Activated naive CD4-positive, alpha-beta T cell treated with anti-CD3 and anti-CD28 coated beads for 36 hours (primary cell): ENCODE measurements at regions of chr6 and their contacts with region 1.

Region 1: DNA sequence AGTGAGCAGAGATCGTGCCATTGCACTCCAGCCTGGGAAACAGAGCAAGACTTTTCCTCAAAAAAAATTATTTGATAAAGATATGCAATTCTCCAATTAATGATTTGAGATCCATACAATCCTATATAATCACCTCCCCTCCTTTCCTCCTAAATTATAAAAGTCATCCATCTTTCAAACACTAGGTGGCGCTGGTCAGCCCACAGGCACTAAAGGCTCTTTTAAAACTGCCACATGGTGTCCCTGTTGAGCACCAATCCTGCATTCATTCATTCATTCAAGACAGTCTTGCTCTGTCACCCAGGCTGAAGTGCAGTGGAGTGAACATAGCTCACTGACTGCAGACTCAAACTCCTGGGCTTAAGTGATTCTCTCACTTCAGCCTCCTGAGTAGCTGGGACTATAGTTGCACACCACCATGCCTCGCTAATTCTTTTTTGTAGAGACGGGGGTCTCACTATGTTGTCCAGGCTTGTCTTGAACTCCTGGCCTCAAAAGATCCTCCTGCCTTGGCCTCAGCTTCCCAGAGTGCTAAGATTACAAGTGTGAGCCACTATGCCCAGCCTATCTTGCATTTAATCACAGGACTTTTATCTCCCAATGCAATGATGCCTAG is 58.7 kb upstream of the SLC2A12 start:
- DNase-seq: peak; percentile 65
- H3K4me3 Mint-ChIP-seq: no peak overlapping the region
- H3K27ac Mint-ChIP-seq: no peak overlapping the region
- H3K4me1 Mint-ChIP-seq: peaks cover 2% of the 10 kb centered on the region
- H3K27me3 Mint-ChIP-seq: peaks cover 11% of the 10 kb centered on the region

Region 2: DNA sequence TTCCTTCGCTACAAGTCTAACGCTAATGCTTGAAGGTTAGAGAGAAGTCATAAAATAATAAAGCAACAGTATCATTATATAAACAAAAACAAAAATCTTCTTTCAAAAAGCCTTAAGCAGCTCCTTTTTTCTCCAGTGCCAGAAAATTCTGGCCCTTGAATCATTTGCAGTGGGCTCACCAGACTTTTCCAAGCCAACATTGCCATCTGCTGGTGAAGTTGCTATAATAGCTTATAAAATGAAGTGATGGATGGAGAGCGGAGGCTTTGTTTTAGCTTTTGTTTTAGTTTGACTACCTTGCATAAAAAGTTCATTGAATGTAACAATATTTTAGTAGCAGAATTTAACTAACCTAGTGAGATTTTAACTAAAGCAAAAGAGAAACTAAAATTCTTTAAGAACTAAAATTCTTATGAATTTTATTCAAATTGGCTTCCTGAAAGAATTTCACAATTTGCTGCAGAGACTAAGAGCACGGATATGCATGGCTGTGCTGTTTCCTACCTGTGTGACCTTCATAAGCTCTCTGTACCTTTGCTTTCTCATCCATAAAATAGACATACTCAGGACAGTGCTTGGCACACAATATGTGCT is 14.0 kb before region 1 on chr6:
- CTCF ChIA-PET with region 1: interaction called, 10 read pairs
- intact Hi-C with region 1: no loop called
- DNase-seq: peak; percentile 80
- H3K4me3 Mint-ChIP-seq: no peak overlapping the region
- H3K27ac Mint-ChIP-seq: no peak overlapping the region
- H3K4me1 Mint-ChIP-seq: no peaks in the 10 kb centered on the region
- H3K27me3 Mint-ChIP-seq: peaks cover 7% of the 10 kb centered on the region

Region 3: DNA sequence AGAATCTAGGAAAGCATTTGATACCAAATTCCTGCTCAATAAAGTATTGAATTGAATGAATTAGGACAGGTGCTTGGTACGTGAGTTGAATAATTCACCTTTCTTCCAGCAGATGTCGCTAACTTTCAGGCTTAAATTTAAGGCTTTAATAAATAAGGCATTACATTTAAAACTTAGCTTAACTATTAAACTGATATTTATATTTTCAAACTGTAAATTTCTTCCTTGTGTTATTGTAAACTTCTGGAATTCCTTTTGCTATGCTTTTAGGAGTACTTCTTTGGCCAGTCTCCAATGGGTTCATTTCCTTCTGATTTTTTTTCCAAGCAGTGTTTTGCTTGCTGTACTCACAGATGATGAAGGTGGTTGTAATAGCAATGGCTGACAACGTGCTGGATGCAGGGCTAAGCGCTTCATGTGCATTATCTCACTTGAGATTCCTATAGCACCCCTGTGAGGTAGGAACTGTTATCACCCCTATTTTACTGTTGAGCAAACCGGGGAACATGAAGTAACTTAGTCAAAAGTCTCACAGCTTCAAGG is 12.6 kb after region 1 on chr6:
- CTCF ChIA-PET with region 1: interaction called, 64 read pairs
- intact Hi-C with region 1: no loop called
- DNase-seq: no peak
- H3K4me3 Mint-ChIP-seq: no peak overlapping the region
- H3K27ac Mint-ChIP-seq: no peak overlapping the region
- H3K4me1 Mint-ChIP-seq: no peaks in the 10 kb centered on the region
- H3K27me3 Mint-ChIP-seq: no peaks in the 10 kb centered on the region

Region 4: DNA sequence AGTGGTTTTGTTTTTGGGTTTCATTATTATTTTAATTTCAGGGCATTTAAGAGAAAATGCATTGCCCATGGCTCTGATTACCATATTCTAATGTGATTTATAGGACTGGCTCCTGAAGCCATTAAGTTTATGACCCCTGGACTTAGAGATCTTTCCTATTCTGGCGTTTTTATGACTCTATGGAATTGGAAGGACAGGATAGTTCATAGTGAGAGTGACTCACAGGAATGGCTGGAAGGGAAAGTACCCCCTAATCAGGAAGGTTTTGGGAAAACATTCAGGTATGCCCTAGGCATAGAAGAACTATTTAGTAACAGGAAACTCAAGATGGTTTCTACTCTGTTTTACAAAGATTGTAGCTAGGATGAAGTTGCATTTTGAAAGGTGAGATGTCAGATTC is 49.9 kb after region 1 on chr6:
- CTCF ChIA-PET with region 1: interaction called, 4 read pairs
- intact Hi-C with region 1: loop called (anchors 1 kb)
- DNase-seq: no peak
- H3K4me3 Mint-ChIP-seq: no peak overlapping the region
- H3K27ac Mint-ChIP-seq: no peak overlapping the region
- H3K4me1 Mint-ChIP-seq: peaks cover 4% of the 10 kb centered on the region
- H3K27me3 Mint-ChIP-seq: no peaks in the 10 kb centered on the region

Region 5: DNA sequence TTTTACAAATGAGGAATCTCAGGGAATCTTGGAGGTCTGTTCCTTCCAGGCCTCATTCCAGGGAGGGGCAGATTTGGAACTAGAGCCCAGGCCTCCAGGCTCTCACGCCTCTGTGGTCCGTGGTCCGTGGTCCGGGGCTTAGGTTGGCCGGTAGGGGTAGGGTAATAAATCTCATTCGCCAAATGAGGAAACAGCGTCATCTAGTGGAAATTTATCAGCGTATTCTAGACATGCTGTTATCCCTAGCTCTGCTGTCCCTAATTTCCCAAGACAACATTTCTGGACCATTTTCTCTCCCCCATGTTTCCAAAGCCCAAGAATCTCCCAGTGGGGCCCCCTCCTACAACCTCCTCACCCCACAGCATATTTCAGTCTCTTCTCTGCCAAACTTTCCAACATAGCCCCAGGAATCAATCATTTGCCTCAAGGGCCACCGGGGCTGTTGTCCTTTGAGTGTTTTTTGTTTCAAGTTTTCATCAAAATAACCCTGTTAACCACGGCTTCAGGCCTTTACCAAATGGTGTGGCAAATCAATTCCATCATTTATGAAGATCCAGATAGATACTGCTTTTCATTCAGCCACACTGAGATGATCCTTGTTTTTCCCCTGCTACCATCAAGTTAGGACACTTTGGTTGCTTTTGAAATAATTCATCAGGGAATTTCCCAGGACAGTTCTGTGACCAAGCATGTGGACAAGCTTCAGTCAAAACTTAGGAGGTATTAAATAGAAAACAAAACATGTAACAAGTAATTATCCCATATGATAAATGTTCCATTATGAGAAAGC is 711.9 kb after region 1 on chr6:
- CTCF ChIA-PET with region 1: interaction called, 7 read pairs
- intact Hi-C with region 1: loop called (anchors 1 kb)
- DNase-seq: peak; percentile 39
- H3K4me3 Mint-ChIP-seq: no peak overlapping the region
- H3K27ac Mint-ChIP-seq: no peak overlapping the region
- H3K4me1 Mint-ChIP-seq: no peaks in the 10 kb centered on the region
- H3K27me3 Mint-ChIP-seq: no peaks in the 10 kb centered on the region

Region 6: GRCh38 chr6:134882426-134883038 is 771.4 kb after region 1 on chr6:
- CTCF ChIA-PET with region 1: interaction called, 3 read pairs
- intact Hi-C with region 1: loop called (anchors 1 kb)
- DNase-seq: peak; percentile 80
- H3K4me3 Mint-ChIP-seq: no peak overlapping the region
- H3K27ac Mint-ChIP-seq: no peak overlapping the region
- H3K4me1 Mint-ChIP-seq: no peaks in the 10 kb centered on the region
- H3K27me3 Mint-ChIP-seq: peaks cover 10% of the 10 kb centered on the region